CD14-positive monocyte (primary cell): ENCODE measurements at regions of chr1 and their contacts with region 1.

Region 1: GRCh38 chr1:40315239-40315794 is 1.8 kb downstream of the COL9A2 start:
- DNase-seq: peak; percentile 76 to 86 (median 85)
- H3K4me3 ChIP-seq: peak overlapping the region; percentile 34 to 76 (median 53)
- H3K4me3 Mint-ChIP-seq: peak overlapping the region; percentile 83 to 94
- H3K27ac ChIP-seq: no peak overlapping the region
- H3K27ac Mint-ChIP-seq: peak overlapping the region in 1 of 7 donors; percentile 83
- H3K4me1 ChIP-seq: peaks cover 53 to 63% of the 10 kb centered on the region in 2 donors
- H3K4me1 Mint-ChIP-seq: peaks cover 50% of the 10 kb centered on the region
- H3K27me3 ChIP-seq: peaks cover 21 to 34% of the 10 kb centered on the region in 2 donors
- H3K27me3 Mint-ChIP-seq: peaks cover 34 to 56% (median 51%) of the 10 kb centered on the region in 3 donors
- CTCF ChIP-seq: peak; percentile 96

Region 2: DNA sequence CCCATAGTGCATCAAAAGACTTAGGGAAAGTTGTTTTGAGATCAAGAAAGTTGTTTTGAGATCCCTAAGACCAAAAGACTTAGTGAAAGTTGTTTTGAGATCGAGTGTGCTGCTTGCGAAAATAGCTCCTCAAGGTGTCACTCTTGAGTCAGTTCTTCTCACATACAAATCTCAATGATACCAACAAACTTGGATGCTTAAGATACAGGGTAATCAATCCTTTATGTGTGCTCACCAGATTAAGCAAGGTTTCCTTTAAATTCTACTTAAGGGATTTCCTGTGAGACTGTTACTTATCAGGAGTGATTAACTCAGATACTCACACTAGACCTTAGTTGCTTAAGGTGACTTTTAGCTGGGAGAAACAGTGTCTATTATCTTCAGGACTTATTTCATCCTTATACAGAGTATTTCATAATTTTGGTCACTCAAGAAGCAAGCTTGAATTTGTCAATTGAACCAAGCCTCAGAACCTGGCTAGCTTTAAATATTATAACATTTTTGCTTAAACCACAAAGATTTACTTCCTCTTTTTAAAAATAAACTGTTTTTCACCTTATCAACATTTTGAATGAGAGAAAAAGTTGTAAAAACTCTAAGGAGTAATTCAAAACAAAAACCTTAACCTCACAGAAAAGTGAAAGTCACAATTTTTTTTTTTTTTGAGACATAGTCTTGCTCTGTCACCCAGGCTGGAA is 162.1 kb before region 1 on chr1:
- intact Hi-C with region 1: loop called (anchors 5 to 10 kb)
- DNase-seq: peak; percentile 38 to 56 (median 55)
- H3K4me3 ChIP-seq: peak overlapping the region in 1 of 3 experiments; percentile 21
- H3K4me3 Mint-ChIP-seq: peak overlapping the region; percentile 62 to 63
- H3K27ac ChIP-seq: peak overlapping the region in 1 of 2 donors; percentile 60
- H3K27ac Mint-ChIP-seq: peak overlapping the region; percentile 74 to 93 (median 89)
- H3K4me1 ChIP-seq: peaks cover 39 to 45% of the 10 kb centered on the region in 2 donors
- H3K4me1 Mint-ChIP-seq: peaks cover 28% of the 10 kb centered on the region
- H3K27me3 ChIP-seq: no peaks in the 10 kb centered on the region
- H3K27me3 Mint-ChIP-seq: peaks cover 0 to 4% (median 0%) of the 10 kb centered on the region in 3 donors
- CTCF ChIP-seq: peak; percentile 74

Region 3: DNA sequence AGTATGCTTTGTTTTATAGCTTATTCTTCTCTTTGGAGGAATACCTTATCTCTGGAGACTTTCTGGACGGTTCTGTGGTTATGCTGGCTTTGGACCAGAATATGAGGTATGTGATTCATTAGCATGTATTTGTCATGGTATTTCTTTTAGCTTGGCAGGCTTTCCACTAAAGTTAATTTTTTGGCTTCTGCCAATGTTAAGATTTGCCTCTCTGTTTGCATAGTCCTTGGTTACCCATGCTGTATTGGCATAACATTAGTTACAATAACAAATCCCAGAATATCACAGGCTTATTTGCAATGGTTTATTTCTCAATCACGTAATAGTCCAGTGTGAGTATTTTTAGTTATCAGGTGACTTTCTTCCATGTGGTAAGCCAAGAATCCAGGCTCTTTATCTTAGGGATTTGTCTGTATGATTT is 47.5 kb before region 1 on chr1:
- intact Hi-C with region 1: loop called in 1 of 2 experiments (anchors 5 kb)
- DNase-seq: no peak
- H3K4me3 ChIP-seq: no peak overlapping the region
- H3K4me3 Mint-ChIP-seq: no peak overlapping the region
- H3K27ac ChIP-seq: no peak overlapping the region
- H3K27ac Mint-ChIP-seq: no peak overlapping the region
- H3K4me1 ChIP-seq: no peaks in the 10 kb centered on the region
- H3K4me1 Mint-ChIP-seq: no peaks in the 10 kb centered on the region
- H3K27me3 ChIP-seq: no peaks in the 10 kb centered on the region
- H3K27me3 Mint-ChIP-seq: no peaks in the 10 kb centered on the region
- CTCF ChIP-seq: no peak

Region 4: GRCh38 chr1:40606978-40607377 is 291.7 kb after region 1 on chr1:
- intact Hi-C with region 1: no loop called
- DNase-seq: no peak
- H3K4me3 ChIP-seq: no peak overlapping the region
- H3K4me3 Mint-ChIP-seq: no peak overlapping the region
- H3K27ac ChIP-seq: peak overlapping the region in 1 of 2 donors; percentile 52
- H3K27ac Mint-ChIP-seq: peak overlapping the region in 4 of 7 donors; percentile 32 to 75 (median 54)
- H3K4me1 ChIP-seq: peaks cover 13 to 27% of the 10 kb centered on the region in 2 donors
- H3K4me1 Mint-ChIP-seq: peaks cover 18% of the 10 kb centered on the region
- H3K27me3 ChIP-seq: no peaks in the 10 kb centered on the region
- H3K27me3 Mint-ChIP-seq: peaks cover 0 to 5% (median 0%) of the 10 kb centered on the region in 3 donors
- CTCF ChIP-seq: no peak